ENCODE measurements at regions of chr7 and their contacts with region 1.

Region 1: DNA sequence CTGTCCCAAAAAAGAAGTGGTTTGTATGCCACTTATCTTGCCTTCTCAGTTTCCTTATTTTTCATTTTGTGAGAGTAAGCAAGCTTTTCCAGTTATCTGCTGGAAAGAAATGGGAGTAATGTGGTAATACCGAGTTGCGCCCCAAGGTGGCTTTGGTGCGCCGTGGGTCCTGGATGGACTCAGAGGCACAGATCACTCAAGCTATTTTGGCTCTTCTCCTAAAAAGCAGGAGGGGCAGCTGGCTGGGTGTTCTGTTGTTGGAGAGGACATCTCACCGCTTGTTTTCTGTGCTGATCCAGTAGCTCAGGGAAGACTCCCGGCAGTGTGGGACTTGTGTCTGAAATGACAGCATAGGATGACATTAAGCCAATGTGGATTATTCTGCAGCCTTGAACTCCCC is 16.4 kb downstream of the PRKRIP1 start:
- DNase-seq: peak; percentile 58
- ATAC-seq: no peak
- H3K4me3 Mint-ChIP-seq: no peak overlapping the region
- H3K27ac Mint-ChIP-seq: peak overlapping the region; percentile 16
- H3K4me1 Mint-ChIP-seq: peaks cover 28% of the 10 kb centered on the region
- H3K27me3 Mint-ChIP-seq: no peaks in the 10 kb centered on the region
- CTCF ChIP-seq: peak; percentile 68

Region 2: DNA sequence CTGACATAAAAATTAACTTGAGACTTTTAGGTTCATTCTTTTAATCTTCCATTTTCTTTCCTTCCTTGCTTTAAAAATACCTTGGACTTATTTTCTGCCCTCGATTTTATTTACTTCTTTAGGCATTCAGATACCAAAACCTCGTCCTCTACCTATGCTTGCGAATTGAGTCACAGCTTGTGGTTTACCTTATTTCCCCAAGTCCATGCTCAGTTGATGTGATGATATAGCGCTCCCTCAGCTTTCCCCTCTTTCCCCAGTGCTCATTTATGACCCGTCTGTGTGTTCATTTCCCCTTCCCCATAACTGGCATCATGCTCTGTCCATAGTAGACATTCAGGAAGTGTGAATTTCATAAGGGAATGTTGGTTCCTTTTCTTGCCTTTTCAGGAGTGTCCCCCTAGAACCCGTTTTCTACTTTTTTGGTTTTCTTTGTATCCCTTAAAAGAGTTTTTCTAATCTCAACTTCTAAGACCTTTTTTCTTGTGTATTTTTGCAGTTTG is 35.5 kb before region 1 on chr7:
- CTCF ChIA-PET with region 1: no interaction called
- POLR2A ChIA-PET with region 1: no interaction called
- intact Hi-C with region 1: no loop called
- DNase-seq: no peak
- ATAC-seq: no peak
- H3K4me3 Mint-ChIP-seq: no peak overlapping the region
- H3K27ac Mint-ChIP-seq: no peak overlapping the region
- H3K4me1 Mint-ChIP-seq: peaks cover 4% of the 10 kb centered on the region
- H3K27me3 Mint-ChIP-seq: no peaks in the 10 kb centered on the region
- CTCF ChIP-seq: no peak

Region 3: GRCh38 chr7:102396027-102397019 is 16.2 kb before region 1 on chr7 and contains the start of gene PRKRIP1:
- CTCF ChIA-PET with region 1: interaction called, 8 read pairs
- POLR2A ChIA-PET with region 1: interaction called, 10 read pairs
- intact Hi-C with region 1: no loop called
- DNase-seq: peak; percentile 96
- ATAC-seq: peak; percentile 96
- H3K4me3 Mint-ChIP-seq: peak within 1 kb of the TSS; percentile 91
- H3K27ac Mint-ChIP-seq: peak within 1 kb of the TSS; percentile 90
- H3K4me1 Mint-ChIP-seq: peaks cover 16% of the 10 kb centered on the region
- H3K27me3 Mint-ChIP-seq: no peaks in the 10 kb centered on the region
- CTCF ChIP-seq: no peak
- total RNA-seq, gene PRKRIP1: 29.8 to 33.6 TPM

Region 4: DNA sequence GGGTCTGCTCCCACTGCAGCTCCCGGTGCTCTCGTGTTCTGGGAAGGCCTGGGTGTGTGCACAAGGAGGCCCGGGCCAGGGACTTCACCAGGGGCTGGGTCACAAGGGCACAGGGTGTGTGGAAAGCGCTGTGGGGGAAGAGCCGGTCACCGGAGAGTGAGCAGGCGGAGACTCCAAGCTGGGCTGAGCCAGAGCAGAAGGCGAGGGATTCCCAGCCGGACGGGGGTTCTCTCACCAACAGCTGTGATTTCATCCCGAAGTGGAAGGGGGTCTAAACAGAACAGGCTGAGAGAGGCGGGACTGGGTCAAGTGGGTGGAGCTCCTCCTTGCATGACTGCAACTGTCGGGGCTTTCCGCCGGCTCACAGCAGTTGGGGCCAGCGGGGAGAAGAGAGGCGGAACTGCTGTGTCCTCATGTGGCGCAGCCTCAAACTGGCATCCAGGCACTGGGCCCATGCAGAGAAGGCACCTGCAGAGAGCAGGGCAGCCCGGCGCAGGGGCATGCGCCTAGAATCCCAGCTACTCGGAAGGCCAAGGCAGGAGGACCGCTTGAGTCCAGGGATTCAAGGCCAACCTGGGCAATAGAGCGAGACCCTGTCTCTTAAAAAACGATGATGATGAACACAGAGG is 13.2 kb after region 1 on chr7:
- CTCF ChIA-PET with region 1: interaction called, 38 read pairs
- POLR2A ChIA-PET with region 1: interaction called, 147 read pairs
- intact Hi-C with region 1: no loop called
- DNase-seq: peak; percentile 93
- ATAC-seq: peak; percentile 80
- H3K4me3 Mint-ChIP-seq: peak overlapping the region; percentile 75
- H3K27ac Mint-ChIP-seq: peak overlapping the region; percentile 98
- H3K4me1 Mint-ChIP-seq: peaks cover 65% of the 10 kb centered on the region
- H3K27me3 Mint-ChIP-seq: no peaks in the 10 kb centered on the region
- CTCF ChIP-seq: no peak

Region 5: DNA sequence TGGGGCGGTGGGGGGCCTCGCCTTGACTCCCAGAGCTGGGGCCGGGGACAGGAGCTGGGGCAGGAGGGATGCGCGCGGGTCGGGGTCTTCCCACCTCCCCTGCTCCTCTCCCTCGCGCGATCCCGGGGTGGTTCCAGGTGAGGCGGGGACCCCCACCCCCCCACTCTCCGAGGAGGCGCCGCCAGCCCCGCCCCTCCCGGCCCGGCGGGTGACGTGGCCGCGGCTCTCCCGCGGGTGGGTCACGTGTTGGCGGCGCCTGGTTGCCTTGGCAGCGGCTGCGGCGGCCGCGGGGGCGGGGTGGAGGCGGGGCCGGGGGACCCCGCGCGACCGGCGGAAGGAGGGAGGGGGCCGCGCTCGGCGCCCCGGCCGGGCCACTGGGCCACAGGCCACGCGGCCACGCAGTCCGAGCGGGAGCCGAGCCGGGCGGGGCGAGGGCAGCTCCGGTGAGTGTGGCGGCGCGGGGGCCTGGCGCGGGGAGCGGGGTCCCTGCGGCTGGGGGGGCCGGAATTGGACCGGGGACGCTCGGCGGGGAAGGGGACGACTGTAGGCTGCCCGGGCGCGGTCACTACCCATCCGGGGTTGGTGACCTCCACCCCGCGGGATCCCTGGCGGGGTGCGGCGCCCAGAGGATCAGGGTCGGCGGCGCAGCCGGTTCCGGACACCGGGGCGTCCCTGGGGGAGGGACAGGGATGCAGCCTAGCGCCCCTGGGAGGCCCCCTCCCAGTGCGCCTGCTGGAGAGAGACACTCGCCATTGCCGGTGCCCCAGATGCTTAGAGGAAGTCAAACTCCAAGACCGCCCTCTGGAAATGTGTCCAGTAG is 20.9 kb after region 1 on chr7 and contains the start of gene ORAI2:
- CTCF ChIA-PET with region 1: interaction called, 18 read pairs
- POLR2A ChIA-PET with region 1: interaction called, 147 read pairs
- intact Hi-C with region 1: no loop called
- DNase-seq: peak; percentile 87
- ATAC-seq: peak; percentile 62
- H3K4me3 Mint-ChIP-seq: peak within 1 kb of the TSS; percentile 79
- H3K27ac Mint-ChIP-seq: peak within 1 kb of the TSS; percentile 95
- H3K4me1 Mint-ChIP-seq: peaks cover 42% of the 10 kb centered on the region
- H3K27me3 Mint-ChIP-seq: no peaks in the 10 kb centered on the region
- CTCF ChIP-seq: no peak
- total RNA-seq, gene ORAI2: 29.4 to 35.8 TPM

Region 6: GRCh38 chr7:102450242-102450641 is 37.7 kb after region 1 on chr7:
- CTCF ChIA-PET with region 1: interaction called, 17 read pairs
- POLR2A ChIA-PET with region 1: interaction called, 3 read pairs
- intact Hi-C with region 1: no loop called
- DNase-seq: peak; percentile 68
- ATAC-seq: peak; percentile 84
- H3K4me3 Mint-ChIP-seq: no peak overlapping the region
- H3K27ac Mint-ChIP-seq: no peak overlapping the region
- H3K4me1 Mint-ChIP-seq: peaks cover 4% of the 10 kb centered on the region
- H3K27me3 Mint-ChIP-seq: no peaks in the 10 kb centered on the region
- CTCF ChIP-seq: peak; percentile 44

Region 7: GRCh38 chr7:102464577-102465280 is 52.2 kb after region 1 on chr7 and contains the starts of genes ALKBH4 and LRWD1:
- CTCF ChIA-PET with region 1: interaction called, 9 read pairs
- POLR2A ChIA-PET with region 1: interaction called, 5 read pairs
- intact Hi-C with region 1: loop called (anchors 5 kb)
- DNase-seq: peak; percentile 97
- ATAC-seq: peak; percentile 95
- H3K4me3 Mint-ChIP-seq: peak within 1 kb of the TSS; percentile 94
- H3K27ac Mint-ChIP-seq: peak within 1 kb of the TSS; percentile 86
- H3K4me1 Mint-ChIP-seq: peaks cover 30% of the 10 kb centered on the region
- H3K27me3 Mint-ChIP-seq: no peaks in the 10 kb centered on the region
- CTCF ChIP-seq: peak; percentile 10
- total RNA-seq, gene ALKBH4: 6.0 to 6.9 TPM
- total RNA-seq, gene LRWD1: 12.3 to 12.7 TPM

Measured in activated CD8-positive, alpha-beta T cell treated with anti-CD3 and anti-CD28 coated beads for 36 hours (primary cell).